Heart left ventricle (tissue), 16 donors: ENCODE measurements at regions of chr1 and their contacts with region 1.

Region 1: DNA sequence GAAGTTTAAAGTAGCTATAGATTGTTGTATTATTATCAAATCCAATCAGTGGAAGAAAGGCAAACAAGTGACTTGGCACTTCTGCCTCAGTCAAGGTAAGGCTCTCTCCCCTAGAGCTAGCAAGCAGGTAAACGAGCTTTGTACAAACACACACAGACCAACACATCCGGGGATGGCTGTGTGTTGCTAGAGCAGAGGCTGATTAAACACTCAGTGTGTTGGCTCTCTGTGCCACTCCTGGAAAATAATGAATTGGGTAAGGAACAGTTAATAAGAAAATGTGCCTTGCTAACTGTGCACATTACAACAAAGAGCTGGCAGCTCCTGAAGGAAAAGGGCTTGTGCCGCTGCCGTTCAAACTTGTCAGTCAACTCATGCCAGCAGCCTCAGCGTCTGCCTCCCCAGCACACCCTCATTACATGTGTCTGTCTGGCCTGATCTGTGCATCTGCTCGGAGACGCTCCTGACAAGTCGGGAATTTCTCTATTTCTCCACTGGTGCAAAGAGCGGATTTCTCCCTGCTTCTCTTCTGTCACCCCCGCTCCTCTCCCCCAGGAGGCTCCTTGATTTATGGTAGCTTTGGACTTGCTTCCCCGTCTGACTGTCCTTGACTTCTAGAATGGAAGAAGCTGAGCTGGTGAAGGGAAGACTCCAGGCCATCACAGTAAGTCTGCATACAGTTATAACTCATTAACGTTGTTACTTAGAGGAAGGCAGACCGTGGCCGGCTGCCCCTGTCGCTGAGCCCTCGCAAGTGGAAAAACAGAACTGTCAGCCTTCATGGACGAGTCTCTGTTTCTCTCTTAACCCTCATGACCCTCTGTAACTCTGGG is at the start of gene PALMD:
- DNase-seq: peak; percentile 63 to 79 (median 68)
- ATAC-seq: peak; percentile 61 to 83 (median 68)
- H3K4me3 ChIP-seq: peak within 1 kb of the TSS; percentile 33 to 77 (median 64)
- H3K27ac ChIP-seq: peak within 1 kb of the TSS; percentile 87 to 98 (median 92)
- H3K4me1 ChIP-seq: peaks cover 0 to 43% (median 32%) of the 10 kb centered on the region in 12 donors
- H3K27me3 ChIP-seq: no peaks in the 10 kb centered on the region
- CTCF ChIP-seq: peak in 1 of 12 donors; percentile 18
- POLR2A ChIP-seq: peak in 1 of 2 donors; percentile 78
- total RNA-seq, gene PALMD: 74.0 to 236 (median 120) TPM

Region 2: GRCh38 chr1:99481391-99481996 is 164.4 kb before region 1 on chr1:
- intact Hi-C with region 1: loop called in 4 of 10 experiments (anchors 2 to 5 kb)
- DNase-seq: peak in 3 of 5 donors; percentile 27 to 56 (median 38)
- ATAC-seq: peak in 2 of 4 donors; percentile 66 to 81
- H3K4me3 ChIP-seq: no peak overlapping the region
- H3K27ac ChIP-seq: no peak overlapping the region
- H3K4me1 ChIP-seq: peaks cover 0 to 3% (median 0%) of the 10 kb centered on the region in 12 donors
- H3K27me3 ChIP-seq: no peaks in the 10 kb centered on the region
- CTCF ChIP-seq: peak; percentile 63 to 88 (median 80)
- POLR2A ChIP-seq: no peak

Region 3: DNA sequence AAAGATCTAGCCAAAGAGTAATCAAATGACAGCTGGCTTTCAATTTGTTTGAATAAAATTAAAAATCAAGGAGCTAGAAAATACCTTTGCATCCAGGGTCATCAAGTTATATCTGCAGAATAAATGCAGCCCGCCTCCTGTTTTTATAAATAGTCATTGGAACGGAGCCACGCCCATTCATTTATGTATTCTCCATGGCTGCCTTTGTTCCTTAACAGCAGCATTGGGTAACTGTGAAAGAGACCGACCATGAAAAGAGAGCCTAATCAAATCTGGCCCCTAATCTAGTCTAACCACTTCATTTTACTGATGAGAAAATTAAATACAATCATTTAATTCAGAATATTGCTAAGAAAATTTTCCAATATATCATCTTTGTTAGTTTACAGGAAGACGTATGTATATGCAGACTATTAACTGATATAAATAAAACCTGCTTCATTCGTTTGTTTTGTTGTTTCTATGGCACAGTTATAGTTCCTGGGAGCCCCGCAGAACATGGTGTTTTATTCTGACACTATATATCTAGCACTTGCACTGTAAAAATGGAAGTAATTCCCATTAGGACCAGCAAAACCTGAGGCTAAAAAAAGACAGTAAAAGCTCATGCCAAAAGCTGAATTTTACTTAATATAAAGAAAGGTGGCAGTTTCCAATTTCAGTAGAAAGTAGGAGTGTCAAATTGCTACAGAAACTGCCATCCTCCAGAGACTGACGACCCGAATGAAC is 111.8 kb before region 1 on chr1:
- intact Hi-C with region 1: loop called in 8 of 10 experiments (anchors 5 to 10 kb)
- DNase-seq: peak in 2 of 5 donors; percentile 31 to 35
- ATAC-seq: peak; percentile 63 to 71 (median 67)
- H3K4me3 ChIP-seq: peak overlapping the region in 7 of 12 donors; percentile 3 to 25 (median 15)
- H3K27ac ChIP-seq: peak overlapping the region; percentile 20 to 81 (median 66)
- H3K4me1 ChIP-seq: peaks cover 3 to 36% (median 21%) of the 10 kb centered on the region in 12 donors
- H3K27me3 ChIP-seq: no peaks in the 10 kb centered on the region
- CTCF ChIP-seq: no peak
- POLR2A ChIP-seq: no peak

Region 4: GRCh38 chr1:99590578-99591209 is 55.2 kb before region 1 on chr1:
- intact Hi-C with region 1: loop called in 1 of 10 experiments (anchors 10 kb)
- DNase-seq: peak in 4 of 5 donors; percentile 52 to 61 (median 60)
- ATAC-seq: peak; percentile 73 to 93 (median 83)
- H3K4me3 ChIP-seq: no peak overlapping the region
- H3K27ac ChIP-seq: peak overlapping the region in 9 of 12 donors; percentile 2 to 81 (median 50)
- H3K4me1 ChIP-seq: peaks cover 0 to 27% (median 10%) of the 10 kb centered on the region in 12 donors
- H3K27me3 ChIP-seq: no peaks in the 10 kb centered on the region
- CTCF ChIP-seq: no peak
- POLR2A ChIP-seq: no peak

Region 5: DNA sequence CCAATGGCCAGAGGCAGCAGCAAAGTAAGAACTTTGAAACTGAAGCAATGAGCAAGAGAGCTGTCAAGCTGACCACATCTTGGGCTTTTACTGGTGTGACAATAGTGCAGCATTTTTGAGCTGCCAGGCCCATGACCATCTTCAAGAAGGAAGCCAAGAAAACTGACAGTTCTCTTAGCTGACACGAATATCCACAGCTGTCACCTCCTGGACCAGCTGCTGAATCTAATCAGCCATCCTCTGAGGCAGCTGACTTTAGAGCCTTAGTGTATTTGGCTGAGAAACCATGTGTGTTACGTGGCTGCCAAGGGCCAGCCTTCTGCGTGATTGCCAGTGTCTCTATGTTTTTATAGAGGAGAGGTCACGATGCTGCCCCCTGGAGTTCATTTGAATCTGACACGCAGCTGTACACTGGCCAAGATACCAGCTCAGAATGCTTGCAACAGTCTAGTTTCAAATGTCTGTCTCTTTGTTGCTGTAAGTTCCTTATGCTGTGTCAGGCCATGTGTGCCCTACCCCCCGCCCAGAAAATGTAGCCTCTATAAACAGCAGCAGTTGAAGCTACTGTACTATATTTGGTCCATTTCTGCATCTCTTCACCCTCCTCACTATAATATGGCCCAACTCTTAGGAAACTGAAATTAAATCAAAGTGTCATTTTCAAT is 39.7 kb after region 1 on chr1:
- intact Hi-C with region 1: loop called in 7 of 10 experiments (anchors 2 to 5 kb)
- DNase-seq: peak; percentile 74 to 90 (median 81)
- ATAC-seq: peak; percentile 79 to 94 (median 88)
- H3K4me3 ChIP-seq: no peak overlapping the region
- H3K27ac ChIP-seq: peak overlapping the region in 11 of 12 donors; percentile 26 to 78 (median 55)
- H3K4me1 ChIP-seq: peaks cover 0 to 66% (median 32%) of the 10 kb centered on the region in 12 donors
- H3K27me3 ChIP-seq: no peaks in the 10 kb centered on the region
- CTCF ChIP-seq: peak; percentile 47 to 76 (median 64)
- POLR2A ChIP-seq: no peak